Esophagus muscularis mucosa (tissue), 4 donors: ENCODE measurements at regions of chr17 and their contacts with region 1.

Region 1: DNA sequence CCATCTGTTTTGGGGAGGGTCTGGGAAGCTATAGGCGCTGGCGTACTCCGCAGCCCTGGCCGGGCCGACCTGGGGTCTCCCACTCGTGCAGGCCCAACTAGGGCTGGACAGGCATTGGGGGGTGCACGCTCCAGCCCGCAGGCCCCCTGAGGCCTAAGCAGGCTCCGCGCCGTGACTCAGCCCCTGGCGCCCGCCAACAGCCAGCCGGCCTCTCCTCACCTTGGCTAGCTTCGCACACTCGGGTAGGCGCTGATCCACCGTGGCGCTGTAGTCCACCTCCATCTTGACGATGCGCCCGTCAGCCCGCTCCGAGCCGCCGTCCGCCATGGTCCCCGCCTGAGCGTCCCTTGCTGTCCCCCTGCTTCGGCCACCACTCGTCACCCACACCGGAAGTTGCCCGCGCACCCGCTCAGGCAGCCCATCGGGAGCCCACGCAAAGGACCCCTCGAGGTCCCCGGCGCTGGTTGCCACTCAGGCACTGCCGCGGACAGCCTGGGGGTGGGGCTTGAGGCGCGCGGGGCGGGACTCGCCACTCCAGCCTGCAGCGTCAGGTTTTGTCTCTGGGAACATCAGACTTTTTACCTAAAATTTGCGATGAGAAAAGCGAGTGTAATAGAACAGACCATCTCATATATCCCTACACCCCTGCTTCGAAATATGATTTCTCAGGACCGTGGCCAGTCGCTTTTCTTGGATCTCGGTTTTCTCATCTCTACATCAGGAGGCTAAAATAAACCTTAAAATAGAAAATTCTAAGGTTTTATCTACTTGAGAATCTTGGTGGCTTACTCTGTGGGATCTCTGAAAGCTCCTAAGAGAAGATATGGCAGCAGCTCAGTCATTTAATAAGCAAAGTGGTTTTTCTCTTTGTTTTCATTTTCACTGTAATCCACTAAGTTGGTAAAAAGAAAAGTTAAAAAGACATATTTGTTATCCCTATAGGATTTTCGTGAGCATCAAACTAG is at the start of gene PSMD12:
- DNase-seq: peak; percentile 98
- H3K4me3 ChIP-seq: peak within 1 kb of the TSS; percentile 77 to 97 (median 92)
- H3K27ac ChIP-seq: peak within 1 kb of the TSS; percentile 92 to 96 (median 94)
- H3K4me1 ChIP-seq: peaks cover 37 to 49% (median 48%) of the 10 kb centered on the region in 4 donors
- H3K27me3 ChIP-seq: no peaks in the 10 kb centered on the region
- CTCF ChIP-seq: no peak
- EP300 ChIP-seq: no peak
- POLR2A ChIP-seq: peak; percentile 67
- total RNA-seq, gene PSMD12: 28.4 to 37.8 (median 30.0) TPM

Region 2: GRCh38 chr17:67245073-67245755 is 121.3 kb before region 1 on chr17 and contains the start of gene HELZ:
- intact Hi-C with region 1: loop called (anchors 10 kb)
- DNase-seq: peak; percentile 92
- H3K4me3 ChIP-seq: peak within 1 kb of the TSS; percentile 85 to 99 (median 96)
- H3K27ac ChIP-seq: peak within 1 kb of the TSS; percentile 82 to 90 (median 86)
- H3K4me1 ChIP-seq: peaks cover 36 to 54% (median 51%) of the 10 kb centered on the region in 4 donors
- H3K27me3 ChIP-seq: no peaks in the 10 kb centered on the region
- CTCF ChIP-seq: no peak
- EP300 ChIP-seq: no peak
- POLR2A ChIP-seq: no peak
- total RNA-seq, gene HELZ: 35.0 to 62.3 (median 45.8) TPM